Mammary epithelial cell (primary cell): ENCODE measurements at regions of chr17 and their contacts with region 1.

Region 1: GRCh38 chr17:7351665-7352501 is at the start of gene KCTD11:
- DNase-seq: peak; percentile 99
- H3K4me3 ChIP-seq: peak within 1 kb of the TSS; percentile 60 to 88 (median 77)
- H3K27ac ChIP-seq: peak within 1 kb of the TSS; percentile 99
- H3K4me1 ChIP-seq: peaks cover 46% of the 10 kb centered on the region
- H3K27me3 ChIP-seq: no peaks in the 10 kb centered on the region
- CTCF ChIP-seq: peak in 1 of 2 donors; percentile 30
- total RNA-seq, gene KCTD11: 13.2 to 43.9 TPM

Region 2: DNA sequence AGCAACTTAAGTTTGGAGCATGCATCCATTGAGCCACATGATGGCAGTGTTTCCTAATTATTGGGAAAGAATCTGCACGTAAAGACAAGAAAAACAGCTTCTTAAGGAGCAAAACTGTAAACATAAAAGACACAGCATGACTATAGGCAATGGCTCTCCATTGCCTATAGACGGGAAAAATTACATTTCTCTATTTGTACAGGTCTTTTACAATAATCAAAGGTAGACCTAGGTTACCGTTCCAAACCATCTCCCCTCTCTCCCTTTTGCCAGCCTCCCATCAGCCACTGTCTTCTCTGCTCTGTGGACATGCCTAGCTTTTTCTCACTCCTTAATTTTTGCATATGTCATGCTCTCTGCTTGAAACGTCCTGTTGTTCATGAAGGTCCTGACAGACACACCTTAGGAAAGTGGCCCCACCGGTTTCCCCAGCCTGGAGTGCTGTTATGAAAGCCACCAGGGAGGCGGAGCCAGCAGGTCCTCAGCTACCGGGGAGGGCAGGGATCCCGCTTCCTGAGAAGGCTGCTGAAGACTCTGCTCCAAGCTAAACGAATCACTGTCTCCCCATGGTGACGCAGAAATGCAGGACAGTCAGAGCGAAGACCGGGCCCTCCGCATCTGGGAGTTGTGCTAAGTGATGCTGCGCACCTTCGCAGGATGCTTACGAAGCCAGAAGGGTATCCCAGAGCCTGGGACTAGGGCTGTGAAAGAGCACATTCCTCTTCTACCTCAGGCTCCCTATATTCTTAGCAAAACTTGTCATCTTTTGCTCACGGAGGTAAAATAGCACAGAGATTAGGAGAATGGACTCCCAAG is 305.8 kb before region 1 on chr17:
- CTCF ChIA-PET with region 1: interaction called, 4 read pairs
- dilution Hi-C with region 1: no loop called
- in situ Hi-C with region 1: no loop called
- intact Hi-C with region 1: loop called (anchors 5 kb)
- DNase-seq: peak; percentile 84
- H3K4me3 ChIP-seq: peak overlapping the region; percentile 20 to 26 (median 22)
- H3K27ac ChIP-seq: peak overlapping the region; percentile 73
- H3K4me1 ChIP-seq: peaks cover 31% of the 10 kb centered on the region
- H3K27me3 ChIP-seq: peaks cover 9% of the 10 kb centered on the region
- CTCF ChIP-seq: peak; percentile 79 to 88

Region 3: DNA sequence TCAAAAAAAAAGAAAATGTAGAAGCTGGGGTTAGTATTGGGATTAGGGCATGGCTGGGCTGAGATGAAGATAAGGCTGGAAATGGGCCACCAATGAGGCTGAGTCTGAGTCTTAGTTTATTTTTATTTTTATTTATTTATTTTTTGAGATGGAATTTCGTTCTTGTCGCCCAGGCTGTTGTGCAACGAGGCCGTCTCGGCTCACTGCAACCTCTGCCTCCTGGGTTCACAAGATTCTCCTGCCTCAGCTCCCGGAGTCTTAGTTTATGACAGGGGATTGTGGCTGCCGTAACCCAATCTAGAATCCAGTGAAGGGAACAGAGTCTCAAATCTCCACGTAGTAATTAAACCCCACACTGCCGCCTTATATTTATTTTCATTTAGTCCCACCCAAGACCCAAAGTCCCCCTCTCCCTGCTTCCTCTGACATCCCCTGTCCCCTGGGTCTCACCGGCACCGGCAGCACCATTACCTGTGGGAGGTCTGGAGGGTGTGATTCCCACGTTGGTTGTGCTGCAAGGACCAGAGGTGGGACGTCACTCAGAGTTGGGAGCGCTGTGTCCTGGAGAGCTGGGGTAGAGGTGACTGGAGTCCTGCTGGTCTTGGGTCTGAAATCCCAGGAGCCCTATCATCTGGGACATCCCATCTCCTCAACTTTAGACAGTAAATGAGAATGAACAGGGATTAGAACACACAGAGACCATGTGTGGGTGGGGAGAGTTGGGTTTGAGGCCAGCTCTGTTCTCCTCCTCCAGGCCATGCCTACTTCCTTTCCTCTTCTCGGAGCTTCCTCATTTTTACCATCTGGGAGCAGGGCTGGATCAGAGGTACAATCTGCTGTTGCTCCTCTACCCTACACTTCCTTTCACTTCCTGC is 272.1 kb before region 1 on chr17 and contains the start of gene CLEC10A:
- CTCF ChIA-PET with region 1: no interaction called
- dilution Hi-C with region 1: no loop called
- in situ Hi-C with region 1: no loop called
- intact Hi-C with region 1: no loop called
- DNase-seq: no peak
- H3K4me3 ChIP-seq: no peak within 1 kb of the TSS
- H3K27ac ChIP-seq: no peak within 1 kb of the TSS
- H3K4me1 ChIP-seq: peaks cover 7% of the 10 kb centered on the region
- H3K27me3 ChIP-seq: no peaks in the 10 kb centered on the region
- CTCF ChIP-seq: no peak
- total RNA-seq, gene CLEC10A: not detected

Region 4: GRCh38 chr17:7314719-7315569 is 36.9 kb before region 1 on chr17 and contains the start of gene GPS2:
- CTCF ChIA-PET with region 1: no interaction called
- dilution Hi-C with region 1: no loop called
- in situ Hi-C with region 1: no loop called
- intact Hi-C with region 1: loop called (anchors 2 kb)
- DNase-seq: peak; percentile 87
- H3K4me3 ChIP-seq: peak within 1 kb of the TSS; percentile 74 to 87 (median 79)
- H3K27ac ChIP-seq: peak within 1 kb of the TSS; percentile 36
- H3K4me1 ChIP-seq: peaks cover 35% of the 10 kb centered on the region
- H3K27me3 ChIP-seq: no peaks in the 10 kb centered on the region
- CTCF ChIP-seq: no peak
- total RNA-seq, gene GPS2: 29.7 to 40.5 TPM

Region 5: GRCh38 chr17:7329374-7329996 is 22.4 kb before region 1 on chr17:
- CTCF ChIA-PET with region 1: no interaction called
- dilution Hi-C with region 1: no loop called
- in situ Hi-C with region 1: no loop called
- intact Hi-C with region 1: loop called (anchors 2 kb)
- DNase-seq: peak; percentile 98
- H3K4me3 ChIP-seq: peak overlapping the region; percentile 74 to 97 (median 77)
- H3K27ac ChIP-seq: peak overlapping the region; percentile 80
- H3K4me1 ChIP-seq: peaks cover 15% of the 10 kb centered on the region
- H3K27me3 ChIP-seq: peaks cover 3% of the 10 kb centered on the region
- CTCF ChIP-seq: no peak

Region 6: GRCh38 chr17:7380855-7381742 is 29.2 kb after region 1 on chr17 and contains the start of gene TNK1:
- CTCF ChIA-PET with region 1: no interaction called
- dilution Hi-C with region 1: no loop called
- in situ Hi-C with region 1: no loop called
- intact Hi-C with region 1: loop called (anchors 1 kb)
- DNase-seq: peak; percentile 66
- H3K4me3 ChIP-seq: peak within 1 kb of the TSS; percentile 57 to 60 (median 57)
- H3K27ac ChIP-seq: peak within 1 kb of the TSS; percentile 50
- H3K4me1 ChIP-seq: peaks cover 7% of the 10 kb centered on the region
- H3K27me3 ChIP-seq: no peaks in the 10 kb centered on the region
- CTCF ChIP-seq: no peak
- total RNA-seq, gene TNK1: 13.3 to 15.9 TPM

Region 7: DNA sequence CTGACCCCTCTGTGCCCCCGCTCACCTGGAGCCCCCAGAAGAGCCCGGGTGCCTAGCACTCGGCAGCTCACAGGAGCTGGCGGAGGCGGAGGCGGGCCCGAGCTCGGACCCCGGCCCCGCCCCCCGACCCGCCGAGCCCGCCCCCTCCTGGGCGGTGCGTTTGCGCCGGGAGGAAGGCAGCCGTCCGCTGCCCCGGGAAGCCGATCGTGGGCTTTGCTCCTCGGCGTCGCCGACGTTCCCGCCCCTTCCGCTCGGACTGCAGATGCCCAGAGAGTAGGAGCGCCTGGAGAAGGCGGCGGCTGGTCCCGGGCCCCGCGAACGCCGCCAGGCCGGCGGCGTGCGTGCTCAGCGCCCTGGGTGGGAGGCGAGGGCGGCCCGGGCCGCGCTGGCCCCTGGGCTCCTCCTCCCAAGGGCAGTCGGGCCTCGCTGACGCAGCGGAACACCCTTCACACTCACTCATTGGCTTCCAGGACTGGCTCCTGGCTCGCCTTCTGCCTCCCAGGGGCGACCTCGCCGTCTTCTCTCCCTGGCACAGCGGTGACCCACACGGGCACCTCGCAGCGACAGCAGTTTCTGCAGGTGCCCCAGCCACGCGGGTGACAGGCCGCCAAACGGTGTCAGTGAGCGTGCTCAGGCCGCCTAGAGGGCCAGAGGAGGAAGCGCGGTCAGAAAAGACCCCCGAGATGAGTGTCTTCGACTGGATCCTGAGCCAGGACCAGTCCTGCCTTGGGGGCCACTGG is 42.7 kb after region 1 on chr17 and contains the start of gene PLSCR3:
- CTCF ChIA-PET with region 1: no interaction called
- dilution Hi-C with region 1: no loop called
- in situ Hi-C with region 1: no loop called
- intact Hi-C with region 1: loop called (anchors 2 kb)
- DNase-seq: peak; percentile 88
- H3K4me3 ChIP-seq: peak within 1 kb of the TSS; percentile 75 to 98 (median 88)
- H3K27ac ChIP-seq: peak within 1 kb of the TSS; percentile 70
- H3K4me1 ChIP-seq: peaks cover 10% of the 10 kb centered on the region
- H3K27me3 ChIP-seq: no peaks in the 10 kb centered on the region
- CTCF ChIP-seq: peak in 1 of 2 donors; percentile 46
- total RNA-seq, gene PLSCR3: 32.3 to 127 TPM

Region 8: DNA sequence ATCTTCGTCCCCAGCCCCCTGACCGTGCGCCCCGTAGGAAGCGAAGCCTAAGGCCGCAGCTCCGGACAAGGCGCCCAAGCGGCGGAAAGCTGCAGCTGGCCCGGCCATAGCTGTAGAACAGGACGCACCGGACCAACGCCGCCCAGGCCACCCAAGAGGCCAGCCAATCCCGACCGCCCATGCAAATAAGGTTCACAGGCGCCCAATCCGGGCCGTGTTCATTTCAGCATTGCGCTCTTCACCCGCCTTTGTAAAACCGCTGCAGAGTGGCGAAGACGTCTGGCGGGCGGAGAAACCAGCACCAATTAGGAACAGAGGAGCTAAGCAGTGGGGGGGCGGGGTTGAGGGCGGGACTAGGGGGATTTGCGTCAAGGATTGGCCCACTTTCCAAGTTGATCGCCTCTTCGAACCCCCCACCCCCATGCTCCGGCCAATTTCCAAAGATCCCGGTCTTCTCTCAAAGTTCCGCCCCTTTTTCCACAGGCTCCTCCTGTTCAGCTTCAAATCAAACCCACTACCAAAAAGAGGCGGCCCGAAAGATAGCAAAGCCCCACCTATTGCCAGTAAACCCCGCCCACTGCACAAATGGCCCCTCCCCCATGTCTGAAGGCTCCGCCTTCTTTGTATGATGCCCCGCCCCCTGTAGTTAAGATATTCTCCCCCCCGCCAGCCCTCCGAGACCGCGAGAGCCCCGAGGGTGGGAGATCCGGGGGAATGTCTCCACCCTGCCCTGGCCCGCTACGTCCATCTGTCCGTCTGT is 52.3 kb after region 1 on chr17 and contains the start of gene TMEM256:
- CTCF ChIA-PET with region 1: interaction called, 3 read pairs
- dilution Hi-C with region 1: no loop called
- in situ Hi-C with region 1: no loop called
- intact Hi-C with region 1: loop called (anchors 2 kb)
- DNase-seq: peak; percentile 99
- H3K4me3 ChIP-seq: peak within 1 kb of the TSS; percentile 66 to 86 (median 70)
- H3K27ac ChIP-seq: peak within 1 kb of the TSS; percentile 42
- H3K4me1 ChIP-seq: peaks cover 7% of the 10 kb centered on the region
- H3K27me3 ChIP-seq: no peaks in the 10 kb centered on the region
- CTCF ChIP-seq: no peak
- total RNA-seq, gene TMEM256: 43.8 to 70.8 TPM

Region 9: DNA sequence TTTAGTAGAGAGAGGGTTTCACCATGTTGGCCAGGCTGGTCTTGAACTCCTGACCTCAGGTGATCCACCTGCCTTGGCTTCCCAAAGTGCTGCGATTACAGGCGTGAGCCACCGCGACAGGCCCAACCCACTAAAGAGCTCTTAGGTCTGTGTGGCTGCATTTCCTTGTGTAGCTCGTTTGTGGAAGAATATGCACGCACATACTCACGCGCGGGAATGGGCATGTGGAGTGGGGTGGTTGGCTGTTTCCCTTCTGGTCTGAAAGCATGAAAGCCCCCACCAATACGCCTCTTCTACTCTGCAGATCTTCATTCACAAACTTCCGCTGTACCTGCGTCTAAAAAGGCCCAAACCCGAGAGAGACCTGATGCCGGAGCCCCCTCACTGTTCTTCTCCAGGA is 103.1 kb after region 1 on chr17:
- CTCF ChIA-PET with region 1: no interaction called
- dilution Hi-C with region 1: no loop called
- in situ Hi-C with region 1: no loop called
- intact Hi-C with region 1: no loop called
- DNase-seq: no peak
- H3K4me3 ChIP-seq: peak overlapping the region in 2 of 3 experiments; percentile 60 to 61
- H3K27ac ChIP-seq: no peak overlapping the region
- H3K4me1 ChIP-seq: peaks cover 20% of the 10 kb centered on the region
- H3K27me3 ChIP-seq: no peaks in the 10 kb centered on the region
- CTCF ChIP-seq: no peak

Region 10: DNA sequence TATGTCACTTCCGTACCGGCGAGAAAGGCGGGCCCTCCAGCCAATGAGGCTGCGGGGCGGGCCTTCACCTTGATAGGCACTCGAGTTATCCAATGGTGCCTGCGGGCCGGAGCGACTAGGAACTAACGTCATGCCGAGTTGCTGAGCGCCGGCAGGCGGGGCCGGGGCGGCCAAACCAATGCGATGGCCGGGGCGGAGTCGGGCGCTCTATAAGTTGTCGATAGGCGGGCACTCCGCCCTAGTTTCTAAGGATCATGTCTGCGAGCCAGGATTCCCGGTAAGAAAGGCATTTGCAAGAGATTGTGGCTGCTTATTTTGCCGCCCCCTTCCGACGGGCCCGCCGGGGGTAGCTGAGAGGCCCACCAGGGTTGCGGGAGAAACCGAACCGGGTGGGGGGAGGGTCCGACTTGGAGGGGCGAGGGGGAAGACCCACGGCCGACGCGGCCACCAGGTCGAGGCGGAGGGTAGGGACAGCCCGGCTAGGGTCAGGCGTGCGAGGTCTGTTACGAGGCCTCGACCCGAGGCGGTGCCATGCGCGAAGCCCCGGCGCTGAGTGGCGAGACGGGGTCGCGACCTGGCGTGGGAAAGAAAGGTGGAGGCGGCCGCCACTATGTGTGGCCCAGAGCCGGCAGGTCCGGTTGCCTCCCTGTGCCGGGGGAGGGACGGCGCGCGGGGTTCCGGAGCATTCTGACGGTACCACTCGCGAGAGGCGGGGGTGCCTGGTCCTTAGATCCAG is 220.9 kb after region 1 on chr17:
- CTCF ChIA-PET with region 1: no interaction called
- dilution Hi-C with region 1: no loop called
- in situ Hi-C with region 1: no loop called
- intact Hi-C with region 1: no loop called
- DNase-seq: peak; percentile 99
- H3K4me3 ChIP-seq: peak overlapping the region; percentile 95 to 98 (median 98)
- H3K27ac ChIP-seq: peak overlapping the region; percentile 95
- H3K4me1 ChIP-seq: peaks cover 38% of the 10 kb centered on the region
- H3K27me3 ChIP-seq: no peaks in the 10 kb centered on the region
- CTCF ChIP-seq: no peak